Psoas muscle (tissue), 8 donors: ENCODE measurements at regions of chr3 and their contacts with region 1.

Region 1: GRCh38 chr3:50227390-50228183 is 8.4 kb upstream of the GNAI2 start:
- DNase-seq: peak; percentile 92 to 96
- ATAC-seq: peak; percentile 90 to 95 (median 92)
- H3K4me3 ChIP-seq: peak overlapping the region; percentile 78
- H3K27ac ChIP-seq: peak overlapping the region; percentile 55
- H3K4me1 ChIP-seq: peaks cover 5% of the 10 kb centered on the region
- H3K27me3 ChIP-seq: no peaks in the 10 kb centered on the region
- CTCF ChIP-seq: peak; percentile 94

Region 2: GRCh38 chr3:49906004-49906743 is 321.4 kb before region 1 on chr3:
- intact Hi-C with region 1: no loop called
- DNase-seq: peak in 1 of 2 donors; percentile 32
- ATAC-seq: peak; percentile 35 to 69 (median 51)
- H3K4me3 ChIP-seq: peak overlapping the region; percentile 39
- H3K27ac ChIP-seq: no peak overlapping the region
- H3K4me1 ChIP-seq: peaks cover 7% of the 10 kb centered on the region
- H3K27me3 ChIP-seq: no peaks in the 10 kb centered on the region
- CTCF ChIP-seq: peak; percentile 58

Region 3: DNA sequence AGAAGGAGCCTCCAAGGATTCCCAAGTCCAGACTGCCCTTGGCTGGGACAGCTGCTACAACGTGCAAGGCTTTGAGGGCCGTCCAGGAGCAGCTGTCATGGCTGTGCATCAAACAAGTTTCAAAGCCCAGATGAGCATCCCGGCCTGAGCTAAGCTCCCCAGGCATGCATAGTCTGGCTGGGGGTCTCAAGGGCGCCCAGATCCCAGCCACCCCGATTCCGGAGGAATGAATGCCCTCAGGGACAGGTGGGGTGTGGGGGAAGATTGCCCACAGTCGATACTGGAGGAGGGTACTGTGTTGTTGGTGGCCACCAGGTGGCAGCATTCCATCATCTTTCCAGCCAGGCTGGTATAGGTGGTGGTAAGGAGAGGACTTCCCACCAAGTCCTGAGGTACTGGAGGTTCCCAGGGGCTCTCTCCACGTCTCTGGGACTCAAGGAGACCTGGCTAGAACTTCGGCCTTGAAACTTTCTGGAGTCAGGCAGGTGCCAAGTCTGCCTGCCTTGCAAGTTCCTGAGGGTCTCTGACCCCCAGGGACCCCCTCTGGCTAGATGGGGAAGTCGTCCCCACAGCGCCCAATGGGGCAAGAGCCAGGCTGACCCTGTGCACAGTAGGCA is 106.1 kb before region 1 on chr3:
- intact Hi-C with region 1: loop called in 1 of 2 experiments (anchors 5 kb)
- DNase-seq: peak; percentile 72 to 88
- ATAC-seq: peak; percentile 84 to 90 (median 86)
- H3K4me3 ChIP-seq: no peak overlapping the region
- H3K27ac ChIP-seq: no peak overlapping the region
- H3K4me1 ChIP-seq: peaks cover 4% of the 10 kb centered on the region
- H3K27me3 ChIP-seq: no peaks in the 10 kb centered on the region
- CTCF ChIP-seq: peak; percentile 87

Region 4: GRCh38 chr3:50245831-50246516 is 18.4 kb after region 1 on chr3:
- intact Hi-C with region 1: loop called (anchors 2 kb)
- DNase-seq: peak; percentile 94 to 96
- ATAC-seq: peak; percentile 83 to 91 (median 89)
- H3K4me3 ChIP-seq: peak overlapping the region; percentile 82
- H3K27ac ChIP-seq: peak overlapping the region; percentile 80
- H3K4me1 ChIP-seq: peaks cover 67% of the 10 kb centered on the region
- H3K27me3 ChIP-seq: no peaks in the 10 kb centered on the region
- CTCF ChIP-seq: peak; percentile 98

Region 5: GRCh38 chr3:50272911-50273693 is 45.5 kb after region 1 on chr3:
- intact Hi-C with region 1: loop called (anchors 1 to 2 kb)
- DNase-seq: peak; percentile 86 to 93
- ATAC-seq: peak; percentile 79 to 86 (median 84)
- H3K4me3 ChIP-seq: peak overlapping the region; percentile 38
- H3K27ac ChIP-seq: no peak overlapping the region
- H3K4me1 ChIP-seq: peaks cover 30% of the 10 kb centered on the region
- H3K27me3 ChIP-seq: peaks cover 0 to 1% (median 0%) of the 10 kb centered on the region in 3 donors
- CTCF ChIP-seq: peak; percentile 99